OCI-LY7 (cell line): ENCODE measurements at regions of chr4 and their contacts with region 1.

Region 1: DNA sequence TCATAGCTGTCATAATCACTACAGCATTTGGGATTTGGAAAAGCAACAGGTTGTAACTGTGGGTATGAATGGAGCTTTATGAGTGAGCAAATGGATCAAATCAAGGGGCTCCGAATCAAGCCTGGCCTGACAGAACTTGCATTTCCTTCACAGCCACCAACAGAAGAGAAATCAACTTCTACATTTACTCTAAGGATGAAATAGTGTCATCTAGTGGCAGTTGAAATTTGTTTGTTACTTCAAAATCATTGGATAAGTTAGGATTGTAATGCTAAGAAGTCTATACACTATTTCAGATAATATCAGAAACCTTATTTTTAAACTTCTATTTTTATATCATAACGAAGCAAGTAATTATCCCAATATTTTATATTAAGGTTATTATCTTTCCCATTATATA is 10.7 kb upstream of the WDR17 start:
- DNase-seq: peak; percentile 54
- H3K4me3 ChIP-seq: no peak overlapping the region
- H3K27ac ChIP-seq: no peak overlapping the region
- H3K4me1 ChIP-seq: peaks cover 21% of the 10 kb centered on the region
- CTCF ChIP-seq: peak; percentile 81

Region 2: GRCh38 chr4:175560604-175561003 is 494.3 kb before region 1 on chr4:
- CTCF ChIA-PET with region 1: no interaction called
- POLR2A ChIA-PET with region 1: no interaction called
- intact Hi-C with region 1: loop called (anchors 5 kb)
- DNase-seq: peak; percentile 58
- H3K4me3 ChIP-seq: no peak overlapping the region
- H3K27ac ChIP-seq: no peak overlapping the region
- H3K4me1 ChIP-seq: peaks cover 8% of the 10 kb centered on the region
- CTCF ChIP-seq: peak; percentile 77

Region 3: DNA sequence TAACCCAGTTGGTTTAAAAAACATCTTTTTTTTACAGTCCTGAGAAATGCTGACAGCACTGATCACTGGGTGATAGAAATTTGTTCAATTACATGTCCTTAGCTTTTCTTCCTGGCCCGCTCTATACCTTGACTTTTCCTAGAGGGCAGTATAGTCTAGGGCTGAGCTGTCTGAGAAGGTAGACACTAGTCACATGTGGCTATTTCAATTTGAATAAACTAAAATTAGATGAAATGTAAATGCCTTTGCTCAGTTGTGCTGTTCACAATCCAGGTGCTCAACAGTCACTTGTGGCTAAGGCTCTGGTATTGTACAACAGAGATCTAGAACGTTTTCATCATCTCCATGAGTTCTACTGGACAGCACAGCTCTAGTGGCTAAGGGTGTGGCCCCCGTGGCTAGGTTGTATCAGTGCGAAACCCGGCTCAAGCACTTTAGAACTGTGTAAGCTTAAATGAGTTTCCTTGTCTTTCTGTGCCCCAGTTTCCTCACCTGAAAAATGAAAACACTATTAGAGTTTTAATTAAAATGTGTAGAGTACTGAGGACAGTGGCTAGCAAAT is 100.9 kb before region 1 on chr4:
- CTCF ChIA-PET with region 1: interaction called, 4 read pairs
- POLR2A ChIA-PET with region 1: interaction called, 3 read pairs
- intact Hi-C with region 1: loop called (anchors 2 kb)
- DNase-seq: peak; percentile 73
- H3K4me3 ChIP-seq: peak overlapping the region; percentile 29
- H3K27ac ChIP-seq: peak overlapping the region; percentile 48
- H3K4me1 ChIP-seq: peaks cover 14% of the 10 kb centered on the region
- CTCF ChIP-seq: peak; percentile 76

Region 4: DNA sequence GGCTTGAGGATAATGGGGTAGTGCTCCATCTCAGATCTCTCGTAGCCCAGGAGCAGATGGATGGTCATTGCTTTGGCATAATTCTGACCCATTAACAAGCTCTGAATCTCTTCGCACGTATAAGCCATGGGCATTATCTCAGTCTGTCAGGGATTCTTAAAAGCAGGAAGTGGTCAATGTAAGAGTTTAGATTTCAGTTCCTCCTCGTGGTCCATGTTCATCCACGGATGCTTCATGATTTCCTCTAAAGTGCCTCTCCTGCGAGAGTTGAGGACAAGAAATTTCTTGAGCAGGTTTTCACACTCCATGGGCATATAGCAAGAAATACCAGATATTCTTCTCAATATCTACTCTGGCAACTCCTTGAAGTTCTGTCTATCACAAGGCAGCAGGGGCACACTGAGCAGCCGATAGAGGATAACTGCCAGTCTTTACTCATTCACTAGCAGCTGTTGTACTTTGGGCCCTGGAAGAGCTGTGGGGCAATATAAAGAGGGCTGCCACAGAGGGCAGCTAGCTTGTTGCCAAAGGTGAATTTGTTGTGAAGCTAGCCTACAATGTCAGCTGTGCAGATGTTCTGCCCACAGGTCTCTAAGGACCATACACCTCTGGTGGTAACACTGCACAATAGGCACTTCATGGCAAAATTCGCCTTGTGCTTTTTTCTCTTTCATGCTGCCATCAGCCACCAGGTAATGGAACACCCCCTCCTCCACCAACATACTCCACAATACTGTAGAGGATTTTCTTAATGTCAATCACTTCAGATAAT is 41.3 kb before region 1 on chr4:
- CTCF ChIA-PET with region 1: no interaction called
- POLR2A ChIA-PET with region 1: interaction called, 11 read pairs
- intact Hi-C with region 1: no loop called
- DNase-seq: peak; percentile 79
- H3K4me3 ChIP-seq: peak overlapping the region; percentile 26
- H3K27ac ChIP-seq: peak overlapping the region; percentile 85
- H3K4me1 ChIP-seq: peaks cover 52% of the 10 kb centered on the region
- CTCF ChIP-seq: no peak

Region 5: GRCh38 chr4:176642472-176642871 is 587.5 kb after region 1 on chr4:
- CTCF ChIA-PET with region 1: no interaction called
- POLR2A ChIA-PET with region 1: no interaction called
- intact Hi-C with region 1: no loop called
- DNase-seq: no peak
- H3K4me3 ChIP-seq: no peak overlapping the region
- H3K27ac ChIP-seq: no peak overlapping the region
- H3K4me1 ChIP-seq: no peaks in the 10 kb centered on the region
- CTCF ChIP-seq: no peak